ENCODE measurements at regions of chr5 and their contacts with region 1.

Region 1: GRCh38 chr5:128021411-128021810 is 62.2 kb upstream of the SLC12A2 start:
- DNase-seq: no peak
- H3K4me3 ChIP-seq: no peak overlapping the region
- H3K27ac ChIP-seq: no peak overlapping the region
- H3K4me1 ChIP-seq: no peaks in the 10 kb centered on the region
- H3K27me3 ChIP-seq: no peaks in the 10 kb centered on the region
- CTCF ChIP-seq: no peak
- EP300 ChIP-seq: no peak
- POLR2A ChIP-seq: no peak

Region 2: GRCh38 chr5:127705120-127705892 is 316.1 kb before region 1 on chr5:
- intact Hi-C with region 1: no loop called
- DNase-seq: peak in 2 of 5 donors; percentile 17 to 64
- H3K4me3 ChIP-seq: no peak overlapping the region
- H3K27ac ChIP-seq: peak overlapping the region in 1 of 2 donors; percentile 22
- H3K4me1 ChIP-seq: peaks cover 7% of the 10 kb centered on the region
- H3K27me3 ChIP-seq: no peaks in the 10 kb centered on the region
- CTCF ChIP-seq: no peak
- EP300 ChIP-seq: no peak
- POLR2A ChIP-seq: no peak

Region 3: DNA sequence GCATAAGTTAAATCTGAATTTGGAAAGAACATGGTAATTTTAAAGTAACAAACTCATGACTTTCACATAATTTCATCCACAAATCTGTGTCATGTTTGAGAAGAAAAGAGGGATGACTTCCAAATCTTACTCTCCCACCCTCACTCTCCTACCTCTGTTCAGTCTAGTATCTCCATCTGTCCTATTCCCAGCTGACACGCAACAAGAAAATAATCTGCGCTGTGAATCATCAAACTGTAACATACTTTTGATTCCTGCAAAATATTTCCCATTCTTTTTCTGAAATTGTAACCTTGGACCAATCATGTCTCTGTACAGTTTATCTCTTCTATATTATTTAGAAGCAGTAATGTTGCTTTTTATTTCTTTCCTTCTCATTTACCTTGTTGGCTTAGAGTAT is 153.5 kb after region 1 on chr5:
- intact Hi-C with region 1: no loop called
- DNase-seq: no peak
- H3K4me3 ChIP-seq: no peak overlapping the region
- H3K27ac ChIP-seq: no peak overlapping the region
- H3K4me1 ChIP-seq: no peaks in the 10 kb centered on the region
- H3K27me3 ChIP-seq: no peaks in the 10 kb centered on the region
- CTCF ChIP-seq: no peak
- EP300 ChIP-seq: no peak
- POLR2A ChIP-seq: no peak

Region 4: GRCh38 chr5:128304088-128304487 is 282.7 kb after region 1 on chr5:
- intact Hi-C with region 1: no loop called
- DNase-seq: no peak
- H3K4me3 ChIP-seq: no peak overlapping the region
- H3K27ac ChIP-seq: no peak overlapping the region
- H3K4me1 ChIP-seq: no peaks in the 10 kb centered on the region
- H3K27me3 ChIP-seq: no peaks in the 10 kb centered on the region
- CTCF ChIP-seq: no peak
- EP300 ChIP-seq: no peak
- POLR2A ChIP-seq: no peak

Region 5: GRCh38 chr5:128613766-128614165 is 592.4 kb after region 1 on chr5:
- intact Hi-C with region 1: loop called in 1 of 4 experiments (anchors 5 kb)
- DNase-seq: no peak
- H3K4me3 ChIP-seq: no peak overlapping the region
- H3K27ac ChIP-seq: no peak overlapping the region
- H3K4me1 ChIP-seq: no peaks in the 10 kb centered on the region
- H3K27me3 ChIP-seq: no peaks in the 10 kb centered on the region
- CTCF ChIP-seq: no peak
- EP300 ChIP-seq: no peak
- POLR2A ChIP-seq: no peak

Measured in ovary (tissue), 10 donors.